ENCODE measurements at regions of chr4 and their contacts with region 1.

Region 1: GRCh38 chr4:78379991-78380729 is 171.4 kb upstream of the ANXA3 start:
- DNase-seq: no peak
- H3K4me3 ChIP-seq: no peak overlapping the region
- H3K27ac ChIP-seq: no peak overlapping the region
- H3K4me1 ChIP-seq: no peaks in the 10 kb centered on the region
- CTCF ChIP-seq: no peak

Region 2: DNA sequence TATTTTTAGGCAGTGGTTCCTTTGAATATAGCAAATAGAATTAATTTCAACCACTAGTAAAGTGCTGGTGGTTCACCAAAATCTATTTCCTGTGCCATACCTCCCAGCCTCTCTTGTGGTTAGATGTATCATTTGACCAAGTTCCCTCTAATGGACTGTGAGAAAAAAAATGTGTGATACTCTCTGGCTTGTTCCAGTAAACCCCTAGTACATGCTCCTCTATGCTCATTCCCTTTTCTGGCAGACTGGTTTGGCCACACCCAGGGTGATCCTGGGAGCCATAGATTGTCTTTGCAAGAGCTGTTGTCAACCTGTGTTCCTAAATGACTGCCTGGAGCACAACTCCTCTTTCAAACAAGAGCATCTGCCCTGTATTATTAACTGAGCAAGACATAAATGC is 213.5 kb before region 1 on chr4:
- CTCF ChIA-PET with region 1: no interaction called
- POLR2A ChIA-PET with region 1: interaction called, 14 read pairs
- intact Hi-C with region 1: no loop called
- DNase-seq: no peak
- H3K4me3 ChIP-seq: no peak overlapping the region
- H3K27ac ChIP-seq: no peak overlapping the region
- H3K4me1 ChIP-seq: no peaks in the 10 kb centered on the region
- CTCF ChIP-seq: no peak

Region 3: DNA sequence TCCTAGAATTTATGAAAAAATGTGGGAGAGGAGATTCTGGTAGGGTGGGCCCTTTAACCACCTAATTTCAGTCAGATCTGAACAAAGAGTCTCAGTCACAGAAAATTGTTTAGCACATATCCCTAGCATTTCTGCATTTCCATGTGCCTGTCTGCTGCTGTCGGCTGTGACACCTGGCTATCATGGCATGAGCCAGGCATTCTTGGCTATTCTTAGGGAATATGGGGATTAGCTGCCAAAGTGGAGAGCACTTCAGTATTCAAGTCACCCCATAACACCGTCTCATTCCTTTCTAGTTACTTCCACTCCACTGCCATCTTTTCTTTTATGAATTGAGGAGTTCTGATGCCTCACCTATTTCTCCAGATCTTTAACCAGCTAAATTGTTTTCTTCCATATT is 111.6 kb before region 1 on chr4:
- CTCF ChIA-PET with region 1: no interaction called
- POLR2A ChIA-PET with region 1: no interaction called
- intact Hi-C with region 1: no loop called
- DNase-seq: no peak
- H3K4me3 ChIP-seq: no peak overlapping the region
- H3K27ac ChIP-seq: no peak overlapping the region
- H3K4me1 ChIP-seq: no peaks in the 10 kb centered on the region
- CTCF ChIP-seq: no peak

Region 4: GRCh38 chr4:78432896-78433295 is 52.7 kb after region 1 on chr4:
- CTCF ChIA-PET with region 1: no interaction called
- POLR2A ChIA-PET with region 1: no interaction called
- intact Hi-C with region 1: loop called (anchors 2 kb)
- DNase-seq: no peak
- H3K4me3 ChIP-seq: no peak overlapping the region
- H3K27ac ChIP-seq: no peak overlapping the region
- H3K4me1 ChIP-seq: no peaks in the 10 kb centered on the region
- CTCF ChIP-seq: no peak

Region 5: GRCh38 chr4:78622253-78622979 is 242.3 kb after region 1 on chr4:
- CTCF ChIA-PET with region 1: no interaction called
- POLR2A ChIA-PET with region 1: no interaction called
- intact Hi-C with region 1: no loop called
- DNase-seq: no peak
- H3K4me3 ChIP-seq: no peak overlapping the region
- H3K27ac ChIP-seq: no peak overlapping the region
- H3K4me1 ChIP-seq: no peaks in the 10 kb centered on the region
- CTCF ChIP-seq: no peak

Measured in OCI-LY7 (cell line).